Posterior cingulate gyrus (tissue), 11 donors: ENCODE measurements at regions of chr6 and their contacts with region 1.

Region 1: DNA sequence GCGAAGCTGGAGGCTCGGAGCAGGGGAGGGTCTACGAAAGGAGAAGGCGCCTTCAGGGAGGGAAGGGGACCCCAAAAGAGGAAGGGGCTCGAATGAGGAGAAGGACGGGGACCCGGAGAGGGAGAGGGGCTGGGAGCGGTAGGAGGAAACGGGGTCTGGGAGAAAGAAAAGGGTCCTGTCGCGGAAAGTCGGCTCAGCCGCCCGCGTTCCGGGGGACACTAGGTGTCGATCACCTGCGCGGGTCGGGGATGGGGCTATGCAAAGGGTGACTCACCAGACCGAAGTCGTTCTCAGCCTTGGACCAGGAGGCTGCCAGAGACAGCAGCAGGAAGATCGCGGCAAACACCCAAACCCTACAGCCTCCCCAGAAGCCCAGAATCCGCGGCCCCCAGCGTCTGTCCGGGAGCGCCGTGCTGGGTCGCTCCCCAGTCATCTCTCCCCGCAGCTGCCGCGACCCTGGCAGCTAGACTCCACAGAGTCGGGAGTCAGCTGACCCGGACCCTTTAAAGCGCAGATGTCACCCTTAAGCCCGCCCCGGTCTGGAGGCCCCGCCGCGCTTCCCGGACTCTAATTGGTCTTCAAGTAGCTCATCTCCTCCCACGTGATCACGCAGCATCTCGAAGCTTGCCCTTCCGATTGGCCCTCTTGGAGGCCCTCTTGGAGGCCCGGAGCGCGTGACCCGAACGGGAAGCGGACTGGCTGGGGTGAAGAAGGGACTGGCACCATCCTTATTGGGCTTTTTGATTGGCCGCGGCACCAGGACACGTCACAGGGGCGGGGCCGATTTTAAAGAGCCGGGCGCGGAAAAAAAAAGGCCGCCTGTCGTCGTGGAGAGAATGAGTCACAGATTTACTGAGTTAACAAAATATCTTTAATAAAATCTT is at the start of gene NEU1:
- DNase-seq: peak; percentile 100

Region 2: GRCh38 chr6:31541658-31542521 is 320.7 kb before region 1 on chr6 and contains the start of gene DDX39B:
- intact Hi-C with region 1: loop called (anchors 10 kb)
- DNase-seq: peak; percentile 93 to 99 (median 96)

Region 3: GRCh38 chr6:31702819-31703522 is 159.6 kb before region 1 on chr6 and contains the start of gene ABHD16A:
- intact Hi-C with region 1: loop called (anchors 2 kb)
- DNase-seq: peak; percentile 96 to 100 (median 98)

Region 4: GRCh38 chr6:31901953-31902643 is 39.5 kb after region 1 on chr6 and contains the start of gene ZBTB12:
- intact Hi-C with region 1: loop called (anchors 2 kb)
- DNase-seq: peak; percentile 92 to 99 (median 94)